Naive thymus-derived CD4-positive, alpha-beta T cell (primary cell): ENCODE measurements at regions of chr1 and their contacts with region 1.

Region 1: GRCh38 chr1:235783148-235783776 is 83.4 kb downstream of the LYST start:
- DNase-seq: peak in 5 of 9 donors; percentile 1 to 20 (median 4)
- ATAC-seq: no peak
- H3K4me3 ChIP-seq: no peak overlapping the region
- H3K4me3 Mint-ChIP-seq: no peak overlapping the region
- H3K27ac ChIP-seq: no peak overlapping the region
- H3K27ac Mint-ChIP-seq: no peak overlapping the region
- H3K4me1 ChIP-seq: no peaks in the 10 kb centered on the region
- H3K4me1 Mint-ChIP-seq: no peaks in the 10 kb centered on the region
- H3K27me3 ChIP-seq: no peaks in the 10 kb centered on the region
- H3K27me3 Mint-ChIP-seq: no peaks in the 10 kb centered on the region

Region 2: DNA sequence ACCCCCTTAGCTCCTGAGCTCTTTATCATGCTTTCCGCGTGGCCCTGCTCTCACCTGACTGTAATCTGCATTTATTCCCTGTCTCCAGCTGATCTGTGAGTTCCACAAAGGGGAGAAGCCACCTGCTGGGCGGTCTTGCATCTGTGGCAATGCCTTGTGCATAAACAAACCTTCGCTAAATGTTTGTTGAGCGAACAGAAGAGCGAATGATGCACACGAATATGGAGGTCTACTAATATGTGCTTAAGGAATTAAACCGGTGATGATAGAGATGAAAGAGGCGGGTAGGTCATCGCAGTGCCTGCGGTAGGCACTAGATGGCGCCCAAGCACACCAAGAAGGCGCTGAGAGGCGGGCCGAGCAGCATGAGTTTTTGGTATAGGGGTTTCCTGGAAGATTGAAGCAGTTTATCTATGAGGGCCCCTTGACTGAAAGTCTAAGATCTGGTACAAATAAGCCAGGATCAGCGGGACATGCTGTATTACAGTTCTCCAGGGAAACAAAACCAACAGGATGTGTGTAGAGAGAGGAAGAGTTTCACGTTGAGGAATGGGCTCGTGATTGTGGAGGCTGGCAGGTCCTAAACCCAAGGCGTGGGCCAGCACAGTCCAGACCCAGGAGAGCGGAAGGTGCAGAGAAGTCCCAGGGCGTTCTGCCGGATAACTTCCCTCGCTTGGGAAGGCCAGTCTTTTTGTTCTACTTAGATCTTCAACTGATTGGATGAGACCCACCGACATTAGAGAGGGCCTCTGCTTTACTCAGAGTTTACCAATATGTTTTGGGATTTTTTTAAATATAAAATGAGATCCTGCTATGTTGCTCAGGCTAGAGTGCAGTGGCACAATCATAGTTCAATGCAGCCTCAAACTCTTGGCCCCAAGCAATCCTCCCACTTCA is 689.3 kb before region 1 on chr1:
- CTCF ChIA-PET with region 1: no interaction called
- POLR2A ChIA-PET with region 1: no interaction called
- intact Hi-C with region 1: loop called in 1 of 2 experiments (anchors 2 kb)
- DNase-seq: peak; percentile 67 to 89 (median 80)
- ATAC-seq: peak; percentile 97
- H3K4me3 ChIP-seq: no peak overlapping the region
- H3K4me3 Mint-ChIP-seq: peak overlapping the region in 1 of 10 donors; percentile 41
- H3K27ac ChIP-seq: no peak overlapping the region
- H3K27ac Mint-ChIP-seq: peak overlapping the region in 3 of 9 donors; percentile 49 to 88 (median 50)
- H3K4me1 ChIP-seq: peaks cover 0 to 3% of the 10 kb centered on the region in 2 donors
- H3K4me1 Mint-ChIP-seq: peaks cover 6 to 14% (median 7%) of the 10 kb centered on the region in 7 donors
- H3K27me3 ChIP-seq: no peaks in the 10 kb centered on the region
- H3K27me3 Mint-ChIP-seq: peaks cover 0 to 6% (median 0%) of the 10 kb centered on the region in 5 donors

Region 3: GRCh38 chr1:235100194-235100772 is 683.0 kb before region 1 on chr1:
- CTCF ChIA-PET with region 1: no interaction called
- POLR2A ChIA-PET with region 1: no interaction called
- intact Hi-C with region 1: loop called in 1 of 2 experiments (anchors 5 kb)
- DNase-seq: peak in 1 of 9 donors; percentile 4
- ATAC-seq: no peak
- H3K4me3 ChIP-seq: no peak overlapping the region
- H3K4me3 Mint-ChIP-seq: no peak overlapping the region
- H3K27ac ChIP-seq: no peak overlapping the region
- H3K27ac Mint-ChIP-seq: no peak overlapping the region
- H3K4me1 ChIP-seq: peaks cover 16 to 21% of the 10 kb centered on the region in 2 donors
- H3K4me1 Mint-ChIP-seq: peaks cover 20 to 38% (median 33%) of the 10 kb centered on the region in 7 donors
- H3K27me3 ChIP-seq: no peaks in the 10 kb centered on the region
- H3K27me3 Mint-ChIP-seq: peaks cover 0 to 5% (median 0%) of the 10 kb centered on the region in 5 donors

Region 4: GRCh38 chr1:235708390-235708962 is 74.8 kb before region 1 on chr1:
- CTCF ChIA-PET with region 1: no interaction called
- POLR2A ChIA-PET with region 1: no interaction called
- intact Hi-C with region 1: no loop called
- DNase-seq: no peak
- ATAC-seq: no peak
- H3K4me3 ChIP-seq: no peak overlapping the region
- H3K4me3 Mint-ChIP-seq: no peak overlapping the region
- H3K27ac ChIP-seq: no peak overlapping the region
- H3K27ac Mint-ChIP-seq: no peak overlapping the region
- H3K4me1 ChIP-seq: no peaks in the 10 kb centered on the region
- H3K4me1 Mint-ChIP-seq: peaks cover 0 to 3% (median 0%) of the 10 kb centered on the region in 7 donors
- H3K27me3 ChIP-seq: no peaks in the 10 kb centered on the region
- H3K27me3 Mint-ChIP-seq: no peaks in the 10 kb centered on the region

Region 5: GRCh38 chr1:235823684-235824083 is 40.4 kb after region 1 on chr1:
- CTCF ChIA-PET with region 1: no interaction called
- POLR2A ChIA-PET with region 1: no interaction called
- intact Hi-C with region 1: no loop called
- DNase-seq: no peak
- ATAC-seq: no peak
- H3K4me3 ChIP-seq: no peak overlapping the region
- H3K4me3 Mint-ChIP-seq: no peak overlapping the region
- H3K27ac ChIP-seq: no peak overlapping the region
- H3K27ac Mint-ChIP-seq: no peak overlapping the region
- H3K4me1 ChIP-seq: no peaks in the 10 kb centered on the region
- H3K4me1 Mint-ChIP-seq: peaks cover 0 to 5% (median 0%) of the 10 kb centered on the region in 7 donors
- H3K27me3 ChIP-seq: no peaks in the 10 kb centered on the region
- H3K27me3 Mint-ChIP-seq: no peaks in the 10 kb centered on the region